Tibial artery (tissue), 4 donors: ENCODE measurements at regions of chr4 and their contacts with region 1.

Region 1: GRCh38 chr4:1365271-1366178 is 18.5 kb downstream of the UVSSA start:
- DNase-seq: no peak
- H3K4me3 ChIP-seq: no peak overlapping the region
- H3K27ac ChIP-seq: no peak overlapping the region
- H3K4me1 ChIP-seq: peaks cover 0 to 7% (median 0%) of the 10 kb centered on the region in 4 donors
- H3K27me3 ChIP-seq: no peaks in the 10 kb centered on the region
- CTCF ChIP-seq: no peak

Region 2: DNA sequence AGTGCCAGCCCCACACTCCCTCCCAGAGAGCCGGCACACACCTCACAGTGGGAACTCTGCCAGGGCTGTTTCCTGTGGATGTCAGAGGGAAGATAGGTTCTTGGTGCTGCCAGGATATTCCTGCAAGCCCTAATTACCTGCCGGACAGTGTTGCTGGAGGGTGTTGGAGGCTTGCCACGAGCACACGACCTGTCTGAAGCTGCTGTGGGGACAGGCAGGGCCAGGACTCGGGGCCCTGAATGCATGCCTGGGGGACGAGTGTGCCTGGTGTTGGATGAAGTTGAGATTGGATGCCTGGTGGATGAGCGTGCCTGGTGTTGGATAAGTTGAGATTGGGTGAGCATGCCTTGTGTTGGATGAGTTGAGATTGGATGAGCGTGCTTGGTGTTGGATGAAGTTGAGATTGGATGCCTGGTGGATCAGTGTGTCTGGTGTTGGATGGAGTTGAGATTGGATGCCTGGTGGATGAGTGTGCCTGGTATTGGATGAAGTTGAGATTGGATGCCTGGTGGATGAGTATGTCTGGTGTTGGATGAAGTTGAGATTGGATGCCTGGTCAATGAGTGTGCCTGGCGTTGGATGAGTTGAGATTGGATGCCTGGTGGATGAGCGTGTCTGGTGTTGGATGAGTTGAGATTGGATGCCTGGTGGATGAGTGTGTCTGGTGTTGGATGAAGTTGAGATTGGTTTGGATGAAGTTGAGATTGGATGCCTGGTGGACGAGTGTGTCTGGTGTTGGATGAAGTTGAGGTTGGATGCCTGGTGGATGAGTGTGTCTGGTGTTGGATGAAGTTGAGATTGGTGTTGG is 41.7 kb before region 1 on chr4:
- intact Hi-C with region 1: no loop called
- DNase-seq: no peak
- H3K4me3 ChIP-seq: no peak overlapping the region
- H3K27ac ChIP-seq: peak overlapping the region in 1 of 2 donors; percentile 27
- H3K4me1 ChIP-seq: peaks cover 0 to 10% (median 5%) of the 10 kb centered on the region in 4 donors
- H3K27me3 ChIP-seq: no peaks in the 10 kb centered on the region
- CTCF ChIP-seq: no peak

Region 3: GRCh38 chr4:1564535-1565375 is 199.2 kb after region 1 on chr4:
- intact Hi-C with region 1: loop called (anchors 1 kb)
- DNase-seq: no peak
- H3K4me3 ChIP-seq: no peak overlapping the region
- H3K27ac ChIP-seq: no peak overlapping the region
- H3K4me1 ChIP-seq: peaks cover 0 to 10% (median 0%) of the 10 kb centered on the region in 4 donors
- H3K27me3 ChIP-seq: peaks cover 0 to 92% of the 10 kb centered on the region in 2 donors
- CTCF ChIP-seq: no peak

Region 4: GRCh38 chr4:1928356-1929239 is 563.1 kb after region 1 on chr4:
- intact Hi-C with region 1: no loop called
- DNase-seq: no peak
- H3K4me3 ChIP-seq: no peak overlapping the region
- H3K27ac ChIP-seq: no peak overlapping the region
- H3K4me1 ChIP-seq: no peaks in the 10 kb centered on the region
- H3K27me3 ChIP-seq: no peaks in the 10 kb centered on the region
- CTCF ChIP-seq: no peak